Sigmoid colon (tissue), 7 donors: ENCODE measurements at regions of chr5 and their contacts with region 1.

Region 1: DNA sequence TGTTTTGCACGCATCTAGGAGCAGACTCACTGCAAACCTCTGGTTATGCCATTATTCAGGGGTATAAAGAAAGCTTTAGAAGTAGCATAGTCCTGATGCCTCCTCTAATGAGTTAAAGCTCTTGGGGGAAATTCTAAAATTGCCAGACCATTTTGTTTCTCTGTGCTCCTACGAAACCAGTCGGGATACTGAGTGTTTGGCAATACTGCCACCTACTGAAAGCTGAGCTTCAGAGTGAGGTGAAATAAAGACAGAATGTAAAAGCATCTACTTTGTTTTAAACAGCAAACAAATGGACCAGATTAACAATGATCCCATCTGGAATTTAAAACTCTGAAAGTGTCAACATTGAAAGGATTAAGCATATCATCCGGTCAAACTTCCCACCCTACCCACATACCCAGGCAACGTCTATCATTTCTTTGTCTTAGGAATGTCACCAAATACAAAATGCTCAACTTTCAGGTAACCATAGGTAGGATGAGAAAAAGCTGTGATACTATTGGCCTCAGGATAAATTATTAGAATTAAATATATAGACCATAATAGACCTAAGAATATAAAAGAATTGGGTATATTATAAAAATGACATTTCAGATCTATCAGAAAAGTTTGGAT is 77.8 kb upstream of the SHISAL2B start:
- DNase-seq: no peak
- H3K4me3 ChIP-seq: no peak overlapping the region
- H3K27ac ChIP-seq: no peak overlapping the region
- H3K4me1 ChIP-seq: no peaks in the 10 kb centered on the region
- H3K27me3 ChIP-seq: no peaks in the 10 kb centered on the region
- CTCF ChIP-seq: peak; percentile 15 to 66 (median 42)
- EP300 ChIP-seq: no peak
- POLR2A ChIP-seq: no peak

Region 2: GRCh38 chr5:64147849-64148441 is 464.5 kb before region 1 on chr5:
- intact Hi-C with region 1: loop called (anchors 2 kb)
- DNase-seq: peak; percentile 73
- H3K4me3 ChIP-seq: no peak overlapping the region
- H3K27ac ChIP-seq: no peak overlapping the region
- H3K4me1 ChIP-seq: peaks cover 0 to 29% (median 20%) of the 10 kb centered on the region in 4 donors
- H3K27me3 ChIP-seq: no peaks in the 10 kb centered on the region
- CTCF ChIP-seq: peak; percentile 51 to 71 (median 66)
- EP300 ChIP-seq: no peak
- POLR2A ChIP-seq: no peak

Region 3: DNA sequence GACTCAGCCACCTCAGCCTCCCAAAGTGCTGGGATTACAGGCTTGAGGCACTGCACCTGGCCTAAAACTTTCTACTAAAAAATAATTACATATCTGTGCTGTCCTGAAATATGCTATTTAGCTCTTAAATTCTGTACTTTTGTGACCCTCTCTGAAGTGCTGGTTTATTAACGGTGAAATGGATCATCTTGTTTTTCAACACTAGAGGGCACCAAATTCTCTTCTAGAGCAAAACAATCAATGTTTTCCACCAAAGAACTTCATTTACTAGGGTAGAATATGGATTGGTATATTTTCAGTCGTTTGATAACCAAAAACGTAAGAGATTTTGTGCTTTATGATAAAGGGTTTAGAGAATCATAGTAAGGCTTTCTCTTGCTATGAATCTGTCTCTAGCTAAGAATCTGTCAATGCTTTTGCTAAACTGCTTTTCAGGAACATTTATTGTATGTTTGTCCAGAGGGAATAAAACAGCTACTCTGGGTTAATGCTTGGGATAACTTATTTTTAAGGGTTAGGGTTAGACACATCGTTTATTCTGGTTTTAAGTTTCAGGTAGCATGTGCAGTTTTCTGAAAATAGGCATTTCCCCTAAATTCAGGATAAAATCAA is 383.2 kb before region 1 on chr5:
- intact Hi-C with region 1: loop called (anchors 5 kb)
- DNase-seq: no peak
- H3K4me3 ChIP-seq: no peak overlapping the region
- H3K27ac ChIP-seq: no peak overlapping the region
- H3K4me1 ChIP-seq: no peaks in the 10 kb centered on the region
- H3K27me3 ChIP-seq: no peaks in the 10 kb centered on the region
- CTCF ChIP-seq: peak in 3 of 4 experiments; percentile 37 to 62 (median 50)
- EP300 ChIP-seq: no peak
- POLR2A ChIP-seq: no peak

Region 4: GRCh38 chr5:64273276-64273675 is 339.2 kb before region 1 on chr5:
- intact Hi-C with region 1: no loop called
- DNase-seq: no peak
- H3K4me3 ChIP-seq: no peak overlapping the region
- H3K27ac ChIP-seq: no peak overlapping the region
- H3K4me1 ChIP-seq: peaks cover 0 to 15% (median 9%) of the 10 kb centered on the region in 4 donors
- H3K27me3 ChIP-seq: no peaks in the 10 kb centered on the region
- CTCF ChIP-seq: no peak
- EP300 ChIP-seq: no peak
- POLR2A ChIP-seq: no peak

Region 5: GRCh38 chr5:64634997-64635686 is 22.7 kb after region 1 on chr5:
- intact Hi-C with region 1: no loop called
- DNase-seq: no peak
- H3K4me3 ChIP-seq: no peak overlapping the region
- H3K27ac ChIP-seq: no peak overlapping the region
- H3K4me1 ChIP-seq: no peaks in the 10 kb centered on the region
- H3K27me3 ChIP-seq: no peaks in the 10 kb centered on the region
- CTCF ChIP-seq: peak; percentile 30 to 84 (median 48)
- EP300 ChIP-seq: no peak
- POLR2A ChIP-seq: no peak

Region 6: GRCh38 chr5:64707191-64707590 is 94.7 kb after region 1 on chr5:
- intact Hi-C with region 1: no loop called
- DNase-seq: no peak
- H3K4me3 ChIP-seq: no peak overlapping the region
- H3K27ac ChIP-seq: no peak overlapping the region
- H3K4me1 ChIP-seq: no peaks in the 10 kb centered on the region
- H3K27me3 ChIP-seq: no peaks in the 10 kb centered on the region
- CTCF ChIP-seq: no peak
- EP300 ChIP-seq: no peak
- POLR2A ChIP-seq: no peak